ENCODE measurements at regions of chr7 and their contacts with region 1.

Region 1: GRCh38 chr7:36152756-36153570 is at the start of gene EEPD1:
- DNase-seq: peak; percentile 99 to 100 (median 100)
- ATAC-seq: peak; percentile 96
- H3K4me3 ChIP-seq: peak within 1 kb of the TSS; percentile 72
- H3K4me3 Mint-ChIP-seq: peak within 1 kb of the TSS; percentile 70 to 93 (median 84)
- H3K27ac ChIP-seq: peak within 1 kb of the TSS; percentile 73
- H3K27ac Mint-ChIP-seq: peak within 1 kb of the TSS in 8 of 9 donors; percentile 10 to 87 (median 74)
- H3K4me1 ChIP-seq: peaks cover 7 to 16% of the 10 kb centered on the region in 2 donors
- H3K4me1 Mint-ChIP-seq: peaks cover 12 to 31% (median 24%) of the 10 kb centered on the region in 7 donors
- H3K27me3 ChIP-seq: no peaks in the 10 kb centered on the region
- H3K27me3 Mint-ChIP-seq: peaks cover 0 to 21% (median 0%) of the 10 kb centered on the region in 5 donors
- total RNA-seq, gene EEPD1: 2.2 to 13.2 (median 3.7) TPM

Region 2: DNA sequence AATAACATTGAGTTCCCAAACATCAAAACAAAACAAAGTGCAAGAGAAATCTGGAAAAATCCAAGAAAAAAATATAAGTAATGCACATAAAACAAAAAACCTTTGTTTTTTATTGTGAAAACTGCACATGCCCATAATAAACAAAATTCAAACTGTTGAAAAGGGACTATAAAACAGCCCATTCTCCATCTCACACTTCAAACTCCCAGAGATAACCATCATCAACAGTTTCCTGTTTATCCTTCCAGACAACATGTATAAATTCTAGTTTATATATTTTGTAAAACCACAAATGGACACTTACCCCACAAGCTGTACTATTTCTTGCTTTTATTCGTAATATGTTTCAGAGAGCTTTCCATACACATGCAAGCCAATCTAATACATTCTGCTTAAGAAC is 1194.9 kb before region 1 on chr7:
- CTCF ChIA-PET with region 1: no interaction called
- POLR2A ChIA-PET with region 1: no interaction called
- intact Hi-C with region 1: no loop called
- DNase-seq: no peak
- ATAC-seq: no peak
- H3K4me3 ChIP-seq: no peak overlapping the region
- H3K4me3 Mint-ChIP-seq: no peak overlapping the region
- H3K27ac ChIP-seq: no peak overlapping the region
- H3K27ac Mint-ChIP-seq: no peak overlapping the region
- H3K4me1 ChIP-seq: no peaks in the 10 kb centered on the region
- H3K4me1 Mint-ChIP-seq: peaks cover 0 to 4% (median 0%) of the 10 kb centered on the region in 7 donors
- H3K27me3 ChIP-seq: no peaks in the 10 kb centered on the region
- H3K27me3 Mint-ChIP-seq: no peaks in the 10 kb centered on the region

Region 3: DNA sequence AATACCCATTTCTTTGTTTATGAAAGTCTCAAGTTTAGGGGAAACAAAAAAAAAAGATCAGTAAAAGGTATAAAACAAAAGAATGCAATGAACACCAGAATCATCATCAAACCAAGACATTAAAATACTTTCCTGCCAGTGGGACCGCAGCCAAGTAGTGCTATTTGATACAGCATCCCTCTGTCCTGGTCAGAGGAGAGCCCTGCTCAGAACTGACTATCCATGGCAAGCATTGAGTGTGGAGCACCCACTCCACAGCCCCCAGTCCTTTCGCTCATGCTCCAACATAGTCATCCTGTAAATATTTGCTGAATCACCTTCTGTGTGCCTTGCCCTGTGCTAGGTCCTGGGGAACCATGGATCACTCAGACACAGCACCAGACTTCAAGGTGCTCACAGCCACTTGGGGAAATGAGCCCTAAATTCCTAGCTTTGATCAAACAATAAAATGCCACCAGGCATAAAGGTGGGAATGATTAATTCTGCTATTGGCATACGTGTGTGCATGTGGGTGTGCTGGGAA is 685.4 kb before region 1 on chr7:
- CTCF ChIA-PET with region 1: no interaction called
- POLR2A ChIA-PET with region 1: no interaction called
- intact Hi-C with region 1: no loop called
- DNase-seq: no peak
- ATAC-seq: no peak
- H3K4me3 ChIP-seq: no peak overlapping the region
- H3K4me3 Mint-ChIP-seq: no peak overlapping the region
- H3K27ac ChIP-seq: no peak overlapping the region
- H3K27ac Mint-ChIP-seq: peak overlapping the region in 1 of 9 donors; percentile 36
- H3K4me1 ChIP-seq: no peaks in the 10 kb centered on the region
- H3K4me1 Mint-ChIP-seq: no peaks in the 10 kb centered on the region
- H3K27me3 ChIP-seq: no peaks in the 10 kb centered on the region
- H3K27me3 Mint-ChIP-seq: peaks cover 11 to 63% (median 39%) of the 10 kb centered on the region in 5 donors

Region 4: DNA sequence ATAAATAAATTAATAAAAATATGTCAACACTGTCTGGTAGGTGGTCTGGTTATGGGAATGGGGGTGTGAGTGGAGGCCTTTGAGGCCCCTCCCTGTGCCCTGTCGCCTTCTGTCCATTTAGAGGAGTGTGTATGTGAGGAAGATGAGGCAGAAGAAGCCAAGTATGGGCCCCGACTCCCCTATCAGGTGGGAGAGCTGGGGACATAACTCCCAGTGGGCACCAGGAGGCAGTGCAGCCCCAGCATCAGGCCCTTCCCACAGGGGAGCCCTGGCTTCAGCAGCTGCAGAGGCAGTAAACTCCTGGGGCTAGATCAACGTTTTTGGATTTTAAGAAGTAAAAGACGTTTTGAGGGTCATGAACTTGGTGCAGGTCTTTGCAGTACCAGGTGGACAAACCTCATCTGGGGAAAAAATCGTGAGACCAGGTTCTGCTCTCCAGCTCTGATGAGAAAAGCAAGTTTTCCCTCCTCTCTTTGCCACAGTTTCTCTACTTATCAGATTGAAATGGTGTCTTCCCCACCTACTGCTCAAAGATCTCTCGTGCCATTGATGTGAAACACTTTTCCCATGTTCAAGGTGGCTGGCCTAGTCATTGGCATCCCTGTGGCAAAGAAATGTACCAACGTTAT is 167.7 kb before region 1 on chr7:
- CTCF ChIA-PET with region 1: no interaction called
- POLR2A ChIA-PET with region 1: no interaction called
- intact Hi-C with region 1: loop called in 1 of 2 experiments (anchors 5 kb)
- DNase-seq: peak; percentile 56 to 81 (median 74)
- ATAC-seq: peak; percentile 97
- H3K4me3 ChIP-seq: no peak overlapping the region
- H3K4me3 Mint-ChIP-seq: no peak overlapping the region
- H3K27ac ChIP-seq: no peak overlapping the region
- H3K27ac Mint-ChIP-seq: peak overlapping the region in 1 of 9 donors; percentile 40
- H3K4me1 ChIP-seq: no peaks in the 10 kb centered on the region
- H3K4me1 Mint-ChIP-seq: no peaks in the 10 kb centered on the region
- H3K27me3 ChIP-seq: no peaks in the 10 kb centered on the region
- H3K27me3 Mint-ChIP-seq: peaks cover 0 to 4% (median 0%) of the 10 kb centered on the region in 5 donors

Region 5: DNA sequence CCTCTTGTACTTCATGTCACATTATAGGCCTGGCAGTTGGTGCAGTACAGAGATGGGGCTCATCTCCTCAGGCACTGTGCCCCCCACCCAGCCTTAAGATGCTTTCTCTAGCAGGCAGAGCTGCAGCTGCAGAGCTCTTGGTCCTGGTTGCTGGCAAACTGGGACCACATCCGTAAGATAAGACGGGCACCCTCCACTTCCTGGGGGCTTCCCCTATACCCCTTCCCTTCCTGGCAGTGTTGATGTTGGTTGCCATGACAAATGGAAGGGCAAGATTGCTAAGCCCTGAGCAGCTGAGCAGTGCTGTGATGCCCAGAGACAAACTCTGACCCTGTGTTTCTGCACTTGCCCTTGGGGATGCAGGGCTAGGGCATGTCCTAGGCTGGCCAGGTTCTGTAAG is 133.3 kb after region 1 on chr7:
- CTCF ChIA-PET with region 1: no interaction called
- POLR2A ChIA-PET with region 1: no interaction called
- intact Hi-C with region 1: loop called (anchors 1 kb)
- DNase-seq: peak in 8 of 9 donors; percentile 19 to 88 (median 78)
- ATAC-seq: peak; percentile 73
- H3K4me3 ChIP-seq: peak overlapping the region; percentile 15
- H3K4me3 Mint-ChIP-seq: peak overlapping the region; percentile 83 to 99 (median 88)
- H3K27ac ChIP-seq: peak overlapping the region; percentile 75
- H3K27ac Mint-ChIP-seq: peak overlapping the region; percentile 96 to 100 (median 100)
- H3K4me1 ChIP-seq: peaks cover 43 to 52% of the 10 kb centered on the region in 2 donors
- H3K4me1 Mint-ChIP-seq: peaks cover 48 to 72% (median 63%) of the 10 kb centered on the region in 7 donors
- H3K27me3 ChIP-seq: no peaks in the 10 kb centered on the region
- H3K27me3 Mint-ChIP-seq: peaks cover 0 to 3% (median 0%) of the 10 kb centered on the region in 5 donors

Region 6: DNA sequence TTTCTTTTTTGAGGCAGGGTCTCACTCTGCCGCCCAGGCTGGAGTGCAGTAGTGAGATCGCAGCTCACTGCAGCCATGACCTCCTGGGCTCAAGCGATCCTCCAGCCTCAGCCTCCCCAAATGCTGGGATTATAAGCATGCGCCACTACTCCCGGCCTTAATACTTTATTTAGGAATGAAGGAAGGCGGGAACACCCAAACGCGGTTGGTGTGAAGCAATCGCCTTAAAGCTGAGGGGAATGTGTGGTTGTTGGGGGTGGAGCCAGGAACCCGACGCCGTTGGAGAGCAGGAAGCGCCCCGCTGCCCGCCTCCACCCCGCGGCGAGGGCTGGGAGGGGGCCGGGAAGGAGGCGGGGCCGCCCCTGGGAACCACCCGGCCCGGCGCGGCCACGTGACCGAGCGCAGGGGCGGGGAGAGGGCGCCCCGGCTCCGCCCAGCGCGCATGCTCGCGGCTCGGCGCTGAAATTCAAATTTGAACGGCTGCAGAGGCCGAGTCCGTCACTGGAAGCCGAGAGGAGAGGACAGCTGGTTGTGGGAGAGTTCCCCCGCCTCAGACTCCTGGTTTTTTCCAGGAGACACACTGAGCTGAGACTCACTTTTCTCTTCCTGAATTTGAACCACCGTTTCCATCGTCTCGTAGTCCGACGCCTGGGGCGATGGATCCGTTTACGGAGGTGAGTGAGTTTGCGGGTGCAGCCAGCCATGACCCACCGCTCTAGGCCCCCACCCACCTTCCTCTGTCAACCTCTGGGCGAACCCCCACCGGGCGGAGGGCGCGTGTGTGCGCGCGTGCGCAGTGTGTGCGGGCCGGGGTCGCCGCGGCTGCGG is 236.6 kb after region 1 on chr7 and contains the start of gene ANLN:
- CTCF ChIA-PET with region 1: no interaction called
- POLR2A ChIA-PET with region 1: no interaction called
- intact Hi-C with region 1: loop called (anchors 1 kb)
- DNase-seq: peak; percentile 71 to 91 (median 82)
- ATAC-seq: peak; percentile 98
- H3K4me3 ChIP-seq: peak within 1 kb of the TSS; percentile 78
- H3K4me3 Mint-ChIP-seq: peak within 1 kb of the TSS; percentile 77 to 90 (median 85)
- H3K27ac ChIP-seq: peak within 1 kb of the TSS; percentile 67
- H3K27ac Mint-ChIP-seq: peak within 1 kb of the TSS; percentile 72 to 90 (median 81)
- H3K4me1 ChIP-seq: peaks cover 8 to 19% of the 10 kb centered on the region in 2 donors
- H3K4me1 Mint-ChIP-seq: peaks cover 12 to 39% (median 26%) of the 10 kb centered on the region in 7 donors
- H3K27me3 ChIP-seq: no peaks in the 10 kb centered on the region
- H3K27me3 Mint-ChIP-seq: peaks cover 0 to 12% (median 0%) of the 10 kb centered on the region in 5 donors
- total RNA-seq, gene ANLN: 0.35 to 48.6 (median 0.82) TPM

Region 7: GRCh38 chr7:36742911-36743775 is 590.2 kb after region 1 on chr7:
- CTCF ChIA-PET with region 1: no interaction called
- POLR2A ChIA-PET with region 1: no interaction called
- intact Hi-C with region 1: no loop called
- DNase-seq: no peak
- ATAC-seq: peak; percentile 81
- H3K4me3 ChIP-seq: no peak overlapping the region
- H3K4me3 Mint-ChIP-seq: no peak overlapping the region
- H3K27ac ChIP-seq: no peak overlapping the region
- H3K27ac Mint-ChIP-seq: peak overlapping the region in 2 of 9 donors; percentile 44 to 52
- H3K4me1 ChIP-seq: peaks cover 0 to 5% of the 10 kb centered on the region in 2 donors
- H3K4me1 Mint-ChIP-seq: peaks cover 7 to 31% (median 15%) of the 10 kb centered on the region in 7 donors
- H3K27me3 ChIP-seq: no peaks in the 10 kb centered on the region
- H3K27me3 Mint-ChIP-seq: peaks cover 0 to 2% (median 0%) of the 10 kb centered on the region in 5 donors

Measured in naive thymus-derived CD4-positive, alpha-beta T cell (primary cell).